Caco-2 (cell line): ENCODE measurements at regions of chr10 and their contacts with region 1.

Region 1: GRCh38 chr10:69408318-69409175 is 8.2 kb downstream of the TACR2 start:
- DNase-seq: peak; percentile 97 to 99
- H3K4me3 ChIP-seq: peak overlapping the region; percentile 52
- H3K4me3 Mint-ChIP-seq: peak overlapping the region; percentile 80
- H3K27ac Mint-ChIP-seq: peak overlapping the region; percentile 86
- H3K4me1 ChIP-seq: peaks cover 13% of the 10 kb centered on the region
- H3K4me1 Mint-ChIP-seq: peaks cover 15% of the 10 kb centered on the region
- H3K27me3 ChIP-seq: no peaks in the 10 kb centered on the region
- H3K27me3 Mint-ChIP-seq: no peaks in the 10 kb centered on the region
- CTCF ChIP-seq: peak; percentile 86 to 92

Region 2: DNA sequence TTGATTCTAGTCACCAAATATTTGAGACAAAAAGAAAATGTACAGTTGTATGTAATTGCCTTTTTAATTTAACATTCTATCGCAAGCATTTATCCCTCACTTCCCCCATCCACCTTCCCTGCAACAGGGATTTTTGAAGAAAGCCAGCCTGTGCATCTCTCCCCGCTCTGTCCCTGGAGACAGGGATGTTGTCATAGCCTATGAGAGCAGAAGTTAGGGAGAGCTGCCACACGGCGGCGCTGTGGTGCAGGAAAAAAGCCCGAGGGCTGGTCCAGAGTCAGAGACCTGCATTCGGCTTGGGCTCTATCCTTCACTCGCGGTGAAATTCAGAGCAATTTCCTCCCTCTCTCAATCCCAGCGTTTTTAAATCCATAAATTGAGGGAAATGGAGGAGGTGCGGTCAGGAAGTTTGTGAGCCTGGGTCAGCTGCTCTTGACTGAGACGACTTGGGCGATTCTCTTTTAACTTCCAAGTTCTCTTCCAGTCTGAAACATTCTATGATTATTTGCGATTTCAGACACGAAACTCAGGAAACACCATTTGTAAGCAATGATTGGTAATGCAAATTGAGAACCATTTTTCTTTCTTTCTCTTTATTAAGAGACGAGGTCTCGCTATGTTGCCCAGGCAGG is 170.9 kb before region 1 on chr10:
- CTCF ChIA-PET with region 1: interaction called, 15 read pairs
- POLR2A ChIA-PET with region 1: no interaction called
- intact Hi-C with region 1: loop called (anchors 1 kb)
- DNase-seq: peak; percentile 86 to 95
- H3K4me3 ChIP-seq: no peak overlapping the region
- H3K4me3 Mint-ChIP-seq: no peak overlapping the region
- H3K27ac Mint-ChIP-seq: no peak overlapping the region
- H3K4me1 ChIP-seq: peaks cover 5% of the 10 kb centered on the region
- H3K4me1 Mint-ChIP-seq: peaks cover under 1% of the 10 kb centered on the region
- H3K27me3 ChIP-seq: no peaks in the 10 kb centered on the region
- H3K27me3 Mint-ChIP-seq: no peaks in the 10 kb centered on the region
- CTCF ChIP-seq: peak; percentile 99 to 100

Region 3: GRCh38 chr10:69392481-69393000 is 16.0 kb before region 1 on chr10:
- CTCF ChIA-PET with region 1: interaction called, 29 read pairs
- POLR2A ChIA-PET with region 1: no interaction called
- intact Hi-C with region 1: no loop called
- DNase-seq: peak; percentile 91 to 94
- H3K4me3 ChIP-seq: no peak overlapping the region
- H3K4me3 Mint-ChIP-seq: no peak overlapping the region
- H3K27ac Mint-ChIP-seq: no peak overlapping the region
- H3K4me1 ChIP-seq: peaks cover 4% of the 10 kb centered on the region
- H3K4me1 Mint-ChIP-seq: no peaks in the 10 kb centered on the region
- H3K27me3 ChIP-seq: no peaks in the 10 kb centered on the region
- H3K27me3 Mint-ChIP-seq: no peaks in the 10 kb centered on the region
- CTCF ChIP-seq: peak; percentile 99 to 100

Region 4: GRCh38 chr10:69439813-69440506 is 31.4 kb after region 1 on chr10:
- CTCF ChIA-PET with region 1: interaction called, 21 read pairs
- POLR2A ChIA-PET with region 1: interaction called, 7 read pairs
- intact Hi-C with region 1: no loop called
- DNase-seq: peak; percentile 85 to 91
- H3K4me3 ChIP-seq: no peak overlapping the region
- H3K4me3 Mint-ChIP-seq: peak overlapping the region; percentile 56
- H3K27ac Mint-ChIP-seq: peak overlapping the region; percentile 86
- H3K4me1 ChIP-seq: peaks cover 36% of the 10 kb centered on the region
- H3K4me1 Mint-ChIP-seq: peaks cover 44% of the 10 kb centered on the region
- H3K27me3 ChIP-seq: no peaks in the 10 kb centered on the region
- H3K27me3 Mint-ChIP-seq: no peaks in the 10 kb centered on the region
- CTCF ChIP-seq: no peak

Region 5: GRCh38 chr10:69515699-69516259 is 107.2 kb after region 1 on chr10:
- CTCF ChIA-PET with region 1: interaction called, 10 read pairs
- POLR2A ChIA-PET with region 1: no interaction called
- intact Hi-C with region 1: no loop called
- DNase-seq: peak; percentile 82 to 88
- H3K4me3 ChIP-seq: no peak overlapping the region
- H3K4me3 Mint-ChIP-seq: no peak overlapping the region
- H3K27ac Mint-ChIP-seq: no peak overlapping the region
- H3K4me1 ChIP-seq: no peaks in the 10 kb centered on the region
- H3K4me1 Mint-ChIP-seq: no peaks in the 10 kb centered on the region
- H3K27me3 ChIP-seq: no peaks in the 10 kb centered on the region
- H3K27me3 Mint-ChIP-seq: no peaks in the 10 kb centered on the region
- CTCF ChIP-seq: peak; percentile 97 to 99